Activated naive CD4-positive, alpha-beta T cell treated with anti-CD3 and anti-CD28 coated beads, Interleukin-2, amount 10 ng/mL, durations not matched to agents 7 days and 5 days (primary cell): ENCODE measurements at regions of chr19 and their contacts with region 1.

Region 1: DNA sequence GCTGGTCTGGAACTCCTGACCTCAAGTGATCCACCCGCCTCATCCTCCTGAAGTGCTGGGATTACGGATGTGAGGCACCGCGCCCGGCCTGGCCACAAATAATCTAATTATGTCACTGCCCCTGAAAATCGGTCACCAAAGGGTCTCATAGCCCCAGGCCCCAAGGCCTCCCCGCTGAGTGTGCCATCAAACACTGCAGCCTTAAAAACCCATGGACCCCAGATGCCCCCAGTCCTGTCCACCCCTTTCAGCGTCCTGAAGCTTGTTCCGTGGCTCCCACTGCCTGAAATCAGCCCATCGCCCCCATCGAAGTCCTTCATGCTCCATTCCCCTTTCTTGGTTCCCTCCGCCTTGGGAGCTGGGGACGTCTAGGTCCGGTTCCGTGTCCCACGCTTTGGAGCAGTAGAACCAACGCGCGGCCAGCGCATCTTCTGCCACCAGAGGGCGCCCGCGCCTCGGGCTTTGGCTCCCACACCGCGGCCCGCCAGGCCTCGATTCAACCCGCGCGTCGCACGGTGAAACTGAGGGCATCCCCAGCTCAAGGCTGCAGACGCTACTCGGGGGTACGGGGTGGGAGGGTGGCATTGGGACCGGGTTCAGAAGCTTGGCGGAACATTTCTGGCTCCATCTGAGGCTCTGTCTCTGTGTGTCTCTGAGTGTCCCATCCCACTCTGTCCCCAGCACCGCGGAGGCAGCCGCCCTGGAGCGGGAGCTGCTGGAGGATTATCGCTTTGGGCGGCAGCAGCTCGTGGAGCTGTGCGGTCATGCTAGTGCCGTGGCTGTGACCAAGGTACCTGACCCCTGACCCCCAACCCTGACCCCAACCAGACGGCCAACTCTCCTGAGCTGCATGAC is 3.5 kb downstream of the YJEFN3 start:
- DNase-seq: peak; percentile 89
- H3K4me3 Mint-ChIP-seq: no peak overlapping the region
- H3K27ac Mint-ChIP-seq: peak overlapping the region; percentile 53
- H3K4me1 Mint-ChIP-seq: peaks cover 12% of the 10 kb centered on the region
- H3K27me3 Mint-ChIP-seq: peaks cover 12% of the 10 kb centered on the region

Region 2: GRCh38 chr19:19315444-19315843 is 216.7 kb before region 1 on chr19:
- CTCF ChIA-PET with region 1: no interaction called
- DNase-seq: no peak
- H3K4me3 Mint-ChIP-seq: no peak overlapping the region
- H3K27ac Mint-ChIP-seq: peak overlapping the region; percentile 42
- H3K4me1 Mint-ChIP-seq: peaks cover 28% of the 10 kb centered on the region
- H3K27me3 Mint-ChIP-seq: no peaks in the 10 kb centered on the region

Region 3: DNA sequence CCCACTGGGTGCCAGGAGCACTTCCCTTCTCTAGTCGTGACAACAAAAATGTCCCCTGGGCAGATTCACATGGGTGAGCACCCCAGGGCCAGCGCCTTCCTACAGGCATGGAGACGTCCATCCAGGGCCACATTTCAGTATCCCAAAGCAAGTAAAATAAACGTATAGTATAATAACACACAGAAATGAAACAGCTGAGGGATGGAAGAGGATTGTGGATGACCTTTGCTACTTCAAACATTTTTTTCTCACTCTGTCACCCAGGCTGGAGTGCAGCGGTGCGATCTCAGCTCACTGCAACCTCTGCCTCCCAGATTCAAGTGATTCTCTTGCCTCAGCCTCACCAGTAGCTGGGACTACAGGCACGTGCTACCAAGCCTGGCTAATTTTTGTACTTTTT is 34.1 kb after region 1 on chr19:
- CTCF ChIA-PET with region 1: no interaction called
- DNase-seq: no peak
- H3K4me3 Mint-ChIP-seq: no peak overlapping the region
- H3K27ac Mint-ChIP-seq: no peak overlapping the region
- H3K4me1 Mint-ChIP-seq: peaks cover 16% of the 10 kb centered on the region
- H3K27me3 Mint-ChIP-seq: no peaks in the 10 kb centered on the region

Region 4: GRCh38 chr19:19643158-19644053 is 111.2 kb after region 1 on chr19 and contains the start of gene GMIP:
- CTCF ChIA-PET with region 1: interaction called, 38 read pairs
- DNase-seq: peak; percentile 92
- H3K4me3 Mint-ChIP-seq: peak within 1 kb of the TSS; percentile 97
- H3K27ac Mint-ChIP-seq: peak within 1 kb of the TSS; percentile 97
- H3K4me1 Mint-ChIP-seq: peaks cover 25% of the 10 kb centered on the region
- H3K27me3 Mint-ChIP-seq: no peaks in the 10 kb centered on the region